ENCODE measurements at regions of chr16 and their contacts with region 1.

Region 1: GRCh38 chr16:72066747-72067146 is 3.7 kb downstream of the HPR start:
- DNase-seq: no peak
- ATAC-seq: peak; percentile 59

Region 2: DNA sequence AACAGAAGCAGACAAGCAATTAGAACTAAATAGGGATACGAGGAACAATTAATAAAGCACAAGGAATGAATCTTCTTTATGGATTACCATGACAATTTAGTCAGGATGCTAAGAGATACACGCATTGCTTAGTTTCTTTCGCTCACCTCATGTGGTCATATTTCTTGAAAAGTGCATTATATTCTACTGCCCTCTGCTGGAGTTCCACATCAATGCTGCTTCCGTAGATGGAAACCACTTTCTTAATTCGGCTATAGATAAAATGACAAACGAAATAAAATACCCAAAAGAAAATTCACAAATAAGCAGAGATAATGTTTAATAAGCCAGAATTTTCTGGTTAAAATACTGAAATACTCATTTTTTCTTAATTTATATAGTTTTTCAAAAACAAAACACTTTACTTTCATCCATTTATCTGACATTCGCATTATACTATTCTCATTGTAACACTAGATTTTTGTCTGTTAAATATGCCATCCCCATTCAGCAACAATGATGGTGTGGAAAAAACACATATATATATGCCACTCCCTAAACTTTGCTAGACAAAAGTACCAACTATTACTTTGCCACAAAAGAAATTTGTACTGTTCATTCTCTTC is 320.2 kb before region 1 on chr16:
- intact Hi-C with region 1: no loop called
- DNase-seq: no peak
- ATAC-seq: no peak

Region 3: GRCh38 chr16:72099377-72099818 is 32.7 kb after region 1 on chr16:
- intact Hi-C with region 1: loop called (anchors 1 kb)
- DNase-seq: no peak
- ATAC-seq: peak; percentile 70

Measured in Right ventricle myocardium inferior (tissue), 1 donor.